PC-3 (cell line): ENCODE measurements at regions of chr6 and their contacts with region 1.

Region 1: GRCh38 chr6:188821-189655 is 103.2 kb upstream of the DUSP22 start:
- DNase-seq: peak; percentile 92
- ATAC-seq: peak; percentile 100
- H3K4me3 ChIP-seq: no peak overlapping the region
- H3K27ac ChIP-seq: no peak overlapping the region
- H3K4me1 ChIP-seq: no peaks in the 10 kb centered on the region
- H3K27me3 ChIP-seq: no peaks in the 10 kb centered on the region
- CTCF ChIP-seq: peak; percentile 97

Region 2: GRCh38 chr6:257031-257725 is 68.1 kb after region 1 on chr6:
- CTCF ChIA-PET with region 1: no interaction called
- POLR2A ChIA-PET with region 1: no interaction called
- intact Hi-C with region 1: no loop called
- DNase-seq: peak; percentile 46
- ATAC-seq: no peak
- H3K4me3 ChIP-seq: no peak overlapping the region
- H3K27ac ChIP-seq: no peak overlapping the region
- H3K4me1 ChIP-seq: peaks cover 5% of the 10 kb centered on the region; the same call in 1 of the 2 replicates
- H3K27me3 ChIP-seq: no peaks in the 10 kb centered on the region
- CTCF ChIP-seq: no peak

Region 3: GRCh38 chr6:291697-292505 is 102.9 kb after region 1 on chr6 and contains the start of gene DUSP22:
- CTCF ChIA-PET with region 1: no interaction called
- POLR2A ChIA-PET with region 1: no interaction called
- intact Hi-C with region 1: loop called (anchors 2 kb)
- DNase-seq: peak; percentile 85
- ATAC-seq: peak; percentile 84
- H3K4me3 ChIP-seq: peak within 1 kb of the TSS; percentile 74
- H3K27ac ChIP-seq: peak within 1 kb of the TSS; percentile 52
- H3K4me1 ChIP-seq: peaks cover 15% of the 10 kb centered on the region
- H3K27me3 ChIP-seq: no peaks in the 10 kb centered on the region
- CTCF ChIP-seq: no peak
- total RNA-seq, gene DUSP22: 26.3 and 37.8 TPM in 2 replicates

Region 4: GRCh38 chr6:319177-320131 is 130.4 kb after region 1 on chr6:
- CTCF ChIA-PET with region 1: no interaction called
- POLR2A ChIA-PET with region 1: no interaction called
- intact Hi-C with region 1: no loop called
- DNase-seq: no peak
- ATAC-seq: no peak
- H3K4me3 ChIP-seq: no peak overlapping the region
- H3K27ac ChIP-seq: no peak overlapping the region
- H3K4me1 ChIP-seq: peaks cover 3% of the 10 kb centered on the region; the same call in 1 of the 2 replicates
- H3K27me3 ChIP-seq: no peaks in the 10 kb centered on the region
- CTCF ChIP-seq: no peak

Region 5: DNA sequence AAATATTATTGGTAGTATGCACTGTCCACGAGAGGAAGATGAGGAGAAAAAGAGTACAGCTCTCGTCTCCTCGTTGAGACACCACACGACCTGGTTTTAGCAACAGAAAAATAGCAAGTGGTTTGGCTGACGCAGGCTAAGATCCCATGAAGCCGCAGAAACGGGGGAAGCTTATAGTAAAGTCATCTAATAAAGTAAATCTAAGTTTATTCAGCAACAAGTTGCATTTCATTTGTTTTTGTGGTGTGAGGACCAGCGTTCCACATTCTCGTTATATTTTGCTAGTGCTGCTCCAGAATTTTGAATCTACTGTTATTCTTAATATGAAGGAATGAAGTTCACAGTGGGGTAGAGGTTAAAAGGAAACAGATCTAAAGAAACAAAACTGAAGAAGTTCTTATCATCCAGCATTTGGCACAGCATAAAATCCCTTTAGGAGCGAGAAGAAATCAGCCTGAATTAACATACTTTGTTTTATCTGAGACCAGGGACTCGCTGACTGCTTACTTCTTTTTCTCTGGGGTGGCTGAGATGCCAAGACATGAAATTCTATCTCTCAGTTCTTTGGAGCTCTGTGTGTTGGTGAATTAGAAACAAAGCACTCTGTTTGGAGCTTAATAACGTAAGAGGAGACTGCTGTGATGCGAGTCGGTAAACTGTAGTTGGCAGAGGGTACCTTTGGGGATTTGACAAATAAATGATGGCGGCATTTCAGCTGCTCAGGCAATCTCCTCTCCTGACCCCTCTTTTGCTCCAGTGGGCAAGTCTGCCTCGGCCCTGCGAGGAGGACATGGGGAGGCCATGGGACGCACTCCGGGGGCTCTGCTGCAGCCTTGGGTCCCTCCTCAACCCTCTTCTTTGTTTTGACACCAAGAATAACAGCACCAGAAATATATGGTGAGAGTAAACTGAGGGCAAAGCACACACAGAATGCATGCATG is 177.6 kb after region 1 on chr6:
- CTCF ChIA-PET with region 1: no interaction called
- POLR2A ChIA-PET with region 1: no interaction called
- intact Hi-C with region 1: loop called (anchors 2 kb)
- DNase-seq: no peak
- ATAC-seq: no peak
- H3K4me3 ChIP-seq: no peak overlapping the region
- H3K27ac ChIP-seq: no peak overlapping the region
- H3K4me1 ChIP-seq: no peaks in the 10 kb centered on the region
- H3K27me3 ChIP-seq: peaks cover 30% of the 10 kb centered on the region; the same call in 1 of the 2 replicates
- CTCF ChIP-seq: no peak

Region 6: DNA sequence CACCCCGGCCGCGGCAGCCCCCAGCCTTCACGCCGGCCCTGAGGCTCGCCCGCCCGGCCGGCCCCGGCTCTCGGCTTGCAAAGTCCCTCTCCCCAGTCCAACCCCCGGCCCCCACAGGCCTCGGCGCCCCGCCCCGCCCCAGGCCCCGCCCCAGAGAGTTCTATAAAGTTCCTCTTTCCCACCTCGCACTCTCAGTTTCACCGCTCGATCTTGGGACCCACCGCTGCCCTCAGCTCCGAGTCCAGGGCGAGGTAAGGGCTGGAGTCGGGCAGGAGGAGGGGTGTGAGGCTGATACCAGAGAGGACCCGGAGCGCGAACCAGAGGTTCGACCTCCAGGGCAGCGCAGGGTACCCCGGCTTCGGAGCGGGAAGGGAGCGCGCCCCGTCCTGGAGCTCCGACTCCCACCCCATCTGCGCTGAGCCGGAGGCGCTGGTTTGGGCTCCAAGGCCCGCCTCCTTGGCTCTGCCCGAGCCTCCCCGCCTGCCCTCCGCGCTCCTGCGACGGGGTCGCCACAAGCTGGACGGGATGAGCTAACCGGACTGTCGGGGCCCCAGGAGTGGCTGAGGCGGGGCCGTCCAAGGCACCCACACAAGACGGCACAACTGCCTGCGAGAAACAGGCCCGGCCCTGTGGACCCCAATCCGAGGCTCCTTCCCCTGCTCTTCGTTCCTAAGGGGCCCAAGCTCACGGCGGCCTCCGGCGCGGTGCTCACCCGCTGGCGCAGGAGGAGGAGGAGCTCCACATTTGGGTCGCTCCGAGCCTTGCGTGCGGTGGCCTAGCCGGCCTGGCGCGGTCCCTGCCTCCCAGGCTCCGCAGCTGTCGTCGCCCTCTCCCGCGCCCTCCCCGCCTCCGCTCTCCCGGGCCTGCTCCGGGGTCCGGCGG is 202.8 kb after region 1 on chr6 and contains the start of gene IRF4:
- CTCF ChIA-PET with region 1: interaction called, 3 read pairs
- POLR2A ChIA-PET with region 1: no interaction called
- intact Hi-C with region 1: loop called (anchors 2 kb)
- DNase-seq: no peak
- ATAC-seq: no peak
- H3K4me3 ChIP-seq: no peak within 1 kb of the TSS
- H3K27ac ChIP-seq: no peak within 1 kb of the TSS
- H3K4me1 ChIP-seq: no peaks in the 10 kb centered on the region
- H3K27me3 ChIP-seq: peaks cover 68% of the 10 kb centered on the region
- CTCF ChIP-seq: no peak
- total RNA-seq, gene IRF4: 0.15 TPM in 1 of 2 replicates, not detected in the other

Region 7: GRCh38 chr6:558089-558488 is 369.1 kb after region 1 on chr6:
- CTCF ChIA-PET with region 1: no interaction called
- POLR2A ChIA-PET with region 1: no interaction called
- intact Hi-C with region 1: loop called (anchors 5 kb)
- DNase-seq: peak; percentile 22
- ATAC-seq: no peak
- H3K4me3 ChIP-seq: no peak overlapping the region
- H3K27ac ChIP-seq: no peak overlapping the region
- H3K4me1 ChIP-seq: no peaks in the 10 kb centered on the region
- H3K27me3 ChIP-seq: no peaks in the 10 kb centered on the region
- CTCF ChIP-seq: peak; percentile 59